Aorta (tissue), 5 donors: ENCODE measurements at regions of chr14 and their contacts with region 1.

Region 1: GRCh38 chr14:92507174-92507768 is 6.3 kb upstream of the RIN3 start:
- DNase-seq: peak in 1 of 2 donors; percentile 52
- ATAC-seq: no peak
- H3K4me3 ChIP-seq: no peak overlapping the region
- H3K27ac ChIP-seq: no peak overlapping the region
- H3K4me1 ChIP-seq: peaks cover 0 to 3% of the 10 kb centered on the region in 2 donors
- H3K27me3 ChIP-seq: no peaks in the 10 kb centered on the region

Region 2: DNA sequence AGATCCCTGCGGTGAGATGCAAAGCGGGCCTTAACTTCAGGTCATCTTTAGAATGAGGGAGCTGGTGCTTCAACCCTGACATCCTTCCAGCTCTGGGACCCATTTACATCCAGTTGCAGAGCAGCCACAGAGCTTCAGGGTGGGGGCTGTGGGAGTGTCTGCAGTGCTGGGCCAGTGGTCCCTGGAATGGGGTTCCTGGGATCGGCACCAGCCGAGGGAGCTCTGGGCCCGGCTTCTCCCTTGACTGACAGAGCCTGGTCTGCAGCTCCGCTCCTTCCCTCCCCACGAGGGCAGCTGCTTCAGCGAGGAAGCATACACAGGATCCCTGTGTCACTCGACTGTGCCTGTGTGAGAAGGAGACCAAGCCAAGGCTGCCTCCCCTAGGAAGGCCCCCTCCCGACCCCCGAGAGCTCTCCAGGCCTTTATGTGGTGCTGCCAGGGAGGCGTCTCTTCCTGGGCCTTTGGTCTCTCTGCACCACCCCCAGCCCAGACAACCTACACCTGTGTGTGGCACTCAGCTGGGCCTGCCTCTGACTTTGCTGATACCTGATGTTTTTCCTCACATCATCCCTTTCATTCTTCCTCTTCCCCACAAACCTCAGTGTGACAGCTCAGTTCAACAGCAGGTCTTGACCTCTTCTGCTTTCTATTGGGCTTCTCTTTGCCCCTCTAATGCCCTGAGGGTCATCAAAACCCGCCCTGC is 41.8 kb before region 1 on chr14:
- intact Hi-C with region 1: loop called in 1 of 2 experiments (anchors 5 kb)
- DNase-seq: peak; percentile 44 to 51
- ATAC-seq: no peak
- H3K4me3 ChIP-seq: no peak overlapping the region
- H3K27ac ChIP-seq: no peak overlapping the region
- H3K4me1 ChIP-seq: no peaks in the 10 kb centered on the region
- H3K27me3 ChIP-seq: no peaks in the 10 kb centered on the region

Region 3: GRCh38 chr14:92553438-92553837 is 46.2 kb after region 1 on chr14:
- intact Hi-C with region 1: no loop called
- DNase-seq: peak; percentile 77 to 88
- ATAC-seq: peak; percentile 45
- H3K4me3 ChIP-seq: no peak overlapping the region
- H3K27ac ChIP-seq: peak overlapping the region; percentile 24 to 46
- H3K4me1 ChIP-seq: no peaks in the 10 kb centered on the region
- H3K27me3 ChIP-seq: no peaks in the 10 kb centered on the region